Activated CD4-positive, alpha-beta memory T cell treated with anti-CD3 and anti-CD28 coated beads, Interleukin-2, amount 10 ng/mL, durations not matched to agents 7 days and 5 days (primary cell): ENCODE measurements at regions of chr9 and their contacts with region 1.

Region 1: GRCh38 chr9:91422758-91423711 is 597 bp downstream of the NFIL3 start:
- DNase-seq: peak; percentile 74
- H3K4me3 Mint-ChIP-seq: peak overlapping the region; percentile 86
- H3K27ac Mint-ChIP-seq: peak overlapping the region; percentile 93
- H3K4me1 Mint-ChIP-seq: peaks cover 63% of the 10 kb centered on the region
- H3K27me3 Mint-ChIP-seq: no peaks in the 10 kb centered on the region

Region 2: DNA sequence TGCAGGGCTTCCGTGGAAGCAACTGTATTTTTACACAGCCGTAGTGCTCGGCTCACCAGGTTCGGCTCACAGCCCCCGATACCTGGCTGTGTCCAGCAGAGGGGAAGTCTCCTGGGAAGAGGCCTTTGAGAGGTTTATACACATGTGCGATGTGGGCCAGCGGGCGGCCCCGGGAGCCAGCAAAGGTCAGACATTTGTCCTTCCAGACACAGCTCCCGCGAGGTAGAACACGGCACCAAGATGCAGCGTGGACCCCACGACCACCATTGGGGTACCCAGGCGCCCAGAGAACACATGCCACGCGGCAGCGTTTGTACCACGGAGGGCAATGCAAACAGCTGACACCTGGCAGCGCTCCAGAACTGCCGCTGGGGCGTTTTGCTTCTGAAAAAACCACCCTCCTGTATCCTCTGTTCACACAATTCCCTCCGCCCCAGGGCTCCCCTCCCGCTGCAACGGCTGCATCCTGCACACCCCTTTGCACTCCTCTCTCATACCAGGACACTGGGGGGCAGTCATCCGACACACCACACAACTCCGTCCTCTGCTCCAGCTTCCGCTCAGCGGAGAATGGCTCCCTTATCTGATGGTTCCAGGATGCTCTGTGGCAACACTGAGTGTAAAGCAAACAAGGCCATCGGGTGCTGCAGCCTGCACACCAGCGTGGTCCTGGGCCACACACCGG is 386.1 kb before region 1 on chr9:
- CTCF ChIA-PET with region 1: interaction called, 61 read pairs
- POLR2A ChIA-PET with region 1: interaction called, 61 read pairs
- DNase-seq: peak; percentile 85
- H3K4me3 Mint-ChIP-seq: peak overlapping the region; percentile 31
- H3K27ac Mint-ChIP-seq: peak overlapping the region; percentile 74
- H3K4me1 Mint-ChIP-seq: peaks cover 65% of the 10 kb centered on the region
- H3K27me3 Mint-ChIP-seq: no peaks in the 10 kb centered on the region

Region 3: GRCh38 chr9:91131433-91131839 is 291.6 kb before region 1 on chr9:
- CTCF ChIA-PET with region 1: interaction called, 3 read pairs
- POLR2A ChIA-PET with region 1: interaction called, 39 read pairs
- DNase-seq: peak; percentile 90
- H3K4me3 Mint-ChIP-seq: peak overlapping the region; percentile 62
- H3K27ac Mint-ChIP-seq: peak overlapping the region; percentile 99
- H3K4me1 Mint-ChIP-seq: peaks cover 61% of the 10 kb centered on the region
- H3K27me3 Mint-ChIP-seq: no peaks in the 10 kb centered on the region

Region 4: DNA sequence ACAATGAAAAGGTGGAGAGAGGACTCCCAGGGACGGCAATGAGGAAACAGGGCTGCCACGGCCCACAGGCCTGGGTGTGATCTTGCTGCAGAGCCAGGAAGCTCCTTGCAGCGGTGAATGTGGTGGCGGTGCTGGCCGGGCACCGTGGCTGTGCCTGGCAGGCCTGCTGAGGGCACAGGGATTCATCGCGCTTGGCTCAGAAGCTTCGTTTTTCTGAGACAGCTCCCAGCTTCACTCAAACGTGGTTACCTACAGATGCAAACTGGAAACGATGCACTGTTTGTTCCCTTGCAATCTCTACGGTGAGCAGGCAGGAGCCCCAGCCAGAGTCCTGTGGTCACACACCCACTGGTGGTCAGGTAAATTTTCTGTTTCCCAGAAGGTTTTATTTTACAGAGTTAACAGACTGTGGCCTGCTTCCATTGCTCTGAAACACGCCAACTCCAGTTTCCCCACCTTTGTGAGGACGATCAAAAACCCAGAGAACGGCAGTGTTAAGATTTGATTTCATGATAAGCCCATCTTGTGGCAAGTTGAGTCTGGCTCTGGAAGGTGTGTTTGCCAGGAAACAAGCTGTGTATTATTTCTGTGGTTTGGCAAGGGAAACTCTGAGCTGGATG is 245.3 kb before region 1 on chr9:
- CTCF ChIA-PET with region 1: no interaction called
- POLR2A ChIA-PET with region 1: interaction called, 10 read pairs
- DNase-seq: peak; percentile 69
- H3K4me3 Mint-ChIP-seq: peak overlapping the region; percentile 40
- H3K27ac Mint-ChIP-seq: peak overlapping the region; percentile 92
- H3K4me1 Mint-ChIP-seq: peaks cover 64% of the 10 kb centered on the region
- H3K27me3 Mint-ChIP-seq: no peaks in the 10 kb centered on the region

Region 5: GRCh38 chr9:91253488-91253887 is 169.5 kb before region 1 on chr9:
- CTCF ChIA-PET with region 1: interaction called, 12 read pairs
- POLR2A ChIA-PET with region 1: interaction called, 10 read pairs
- DNase-seq: peak; percentile 66
- H3K4me3 Mint-ChIP-seq: no peak overlapping the region
- H3K27ac Mint-ChIP-seq: no peak overlapping the region
- H3K4me1 Mint-ChIP-seq: peaks cover 56% of the 10 kb centered on the region
- H3K27me3 Mint-ChIP-seq: no peaks in the 10 kb centered on the region

Region 6: GRCh38 chr9:91361291-91362050 is 61.6 kb before region 1 on chr9 and contains the start of gene AUH:
- CTCF ChIA-PET with region 1: interaction called, 54 read pairs
- POLR2A ChIA-PET with region 1: interaction called, 296 read pairs
- DNase-seq: peak; percentile 88
- H3K4me3 Mint-ChIP-seq: peak within 1 kb of the TSS; percentile 99
- H3K27ac Mint-ChIP-seq: peak within 1 kb of the TSS; percentile 94
- H3K4me1 Mint-ChIP-seq: peaks cover 55% of the 10 kb centered on the region
- H3K27me3 Mint-ChIP-seq: no peaks in the 10 kb centered on the region
- total RNA-seq, gene AUH: 34.8 to 39.3 TPM

Region 7: GRCh38 chr9:91474656-91475055 is 51.6 kb after region 1 on chr9:
- CTCF ChIA-PET with region 1: no interaction called
- POLR2A ChIA-PET with region 1: no interaction called
- DNase-seq: no peak
- H3K4me3 Mint-ChIP-seq: no peak overlapping the region
- H3K27ac Mint-ChIP-seq: no peak overlapping the region
- H3K4me1 Mint-ChIP-seq: no peaks in the 10 kb centered on the region
- H3K27me3 Mint-ChIP-seq: peaks cover 54% of the 10 kb centered on the region